Aorta (tissue), 5 donors: ENCODE measurements at regions of chr3 and their contacts with region 1.

Region 1: DNA sequence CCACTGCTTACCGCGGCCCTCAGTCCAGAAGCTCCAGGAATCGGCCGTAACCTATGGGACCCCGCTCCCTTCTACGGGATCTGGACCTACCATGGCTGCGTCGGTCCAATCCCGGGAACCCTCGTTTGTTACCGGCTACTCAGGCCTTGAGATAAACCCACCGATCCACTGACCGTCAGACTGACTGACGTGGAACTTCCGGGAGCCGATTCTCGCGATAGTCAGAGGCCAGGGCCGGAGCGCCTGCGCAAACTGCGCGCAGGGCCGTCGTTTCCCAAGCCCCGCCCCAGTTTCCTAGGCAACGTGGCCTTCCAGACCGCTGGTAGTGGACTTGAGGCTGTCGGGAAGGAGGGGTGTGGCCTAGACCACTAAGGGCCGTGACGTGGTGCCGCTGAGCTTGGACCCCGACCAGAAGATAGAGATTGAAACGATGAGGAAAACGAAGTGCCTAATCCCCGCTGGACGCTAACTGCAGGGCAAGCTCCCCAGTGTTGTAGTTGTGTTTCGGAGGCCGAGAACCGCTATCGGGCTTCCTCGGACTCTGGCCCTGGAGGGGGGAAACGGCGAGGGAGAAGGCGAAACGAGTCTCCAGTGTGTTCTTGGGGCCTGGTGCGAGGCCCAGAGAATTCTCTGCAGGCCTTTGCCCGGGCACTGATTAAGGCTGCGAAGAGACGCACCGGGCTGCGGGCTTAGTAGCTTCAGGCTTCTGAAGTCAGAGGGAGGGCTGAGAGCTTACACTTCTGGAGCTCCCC is at the start of gene COPB2:
- DNase-seq: peak; percentile 100
- ATAC-seq: peak; percentile 100
- H3K4me3 ChIP-seq: peak within 1 kb of the TSS; percentile 81 to 83
- H3K27ac ChIP-seq: peak within 1 kb of the TSS; percentile 73 to 99
- H3K4me1 ChIP-seq: peaks cover 0 to 3% of the 10 kb centered on the region in 2 donors
- H3K27me3 ChIP-seq: no peaks in the 10 kb centered on the region
- total RNA-seq, gene COPB2: 124 to 130 TPM

Region 2: GRCh38 chr3:139343895-139344856 is 45.5 kb before region 1 on chr3 and contains the start of gene MRPS22:
- intact Hi-C with region 1: loop called (anchors 5 kb)
- DNase-seq: peak; percentile 88 to 89
- ATAC-seq: peak; percentile 93
- H3K4me3 ChIP-seq: peak within 1 kb of the TSS; percentile 93 to 100
- H3K27ac ChIP-seq: peak within 1 kb of the TSS in 1 of 2 donors; percentile 86
- H3K4me1 ChIP-seq: peaks cover 0 to 3% of the 10 kb centered on the region in 2 donors
- H3K27me3 ChIP-seq: no peaks in the 10 kb centered on the region
- total RNA-seq, gene MRPS22: 25.4 to 31.0 TPM

Region 3: GRCh38 chr3:139427283-139427993 is 37.8 kb after region 1 on chr3:
- intact Hi-C with region 1: no loop called
- DNase-seq: no peak
- ATAC-seq: peak; percentile 86
- H3K4me3 ChIP-seq: no peak overlapping the region
- H3K27ac ChIP-seq: no peak overlapping the region
- H3K4me1 ChIP-seq: no peaks in the 10 kb centered on the region
- H3K27me3 ChIP-seq: no peaks in the 10 kb centered on the region